ENCODE measurements at regions of chr2 and their contacts with region 1.

Region 1: DNA sequence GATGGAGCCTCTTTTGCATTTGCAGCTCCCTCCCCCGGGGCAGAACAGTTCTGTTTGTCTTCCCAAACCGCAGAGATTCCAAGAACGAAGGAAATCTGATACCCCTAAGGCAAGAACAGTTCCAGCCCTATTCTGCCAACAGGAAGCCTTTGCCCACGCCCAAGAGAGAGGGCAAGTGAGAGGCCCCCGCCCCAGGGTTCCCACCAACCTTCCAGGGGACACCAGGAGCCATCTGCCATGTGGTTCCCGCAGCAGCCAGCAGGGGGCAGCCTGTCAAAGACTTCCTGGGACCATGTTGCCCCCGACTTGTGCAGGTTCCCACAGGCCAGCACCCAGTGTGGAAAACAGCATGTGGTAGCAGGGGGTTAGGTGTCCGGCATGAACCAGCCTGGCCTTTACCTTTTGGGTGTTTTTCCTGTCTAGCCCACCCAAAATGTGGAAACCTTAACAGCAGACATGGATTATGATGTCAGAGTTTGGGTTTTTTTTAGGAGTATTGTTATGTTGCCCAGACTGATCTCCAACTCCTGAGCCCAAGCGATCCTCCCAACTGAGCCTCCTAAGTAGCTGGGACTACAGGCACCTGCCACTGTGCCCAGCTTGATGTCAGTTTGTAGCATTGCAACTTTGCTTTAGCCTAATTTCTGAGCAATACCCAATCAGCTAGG is 21.7 kb upstream of the EFHD1 start:
- DNase-seq: peak; percentile 52
- ATAC-seq: peak; percentile 44 to 64

Region 2: DNA sequence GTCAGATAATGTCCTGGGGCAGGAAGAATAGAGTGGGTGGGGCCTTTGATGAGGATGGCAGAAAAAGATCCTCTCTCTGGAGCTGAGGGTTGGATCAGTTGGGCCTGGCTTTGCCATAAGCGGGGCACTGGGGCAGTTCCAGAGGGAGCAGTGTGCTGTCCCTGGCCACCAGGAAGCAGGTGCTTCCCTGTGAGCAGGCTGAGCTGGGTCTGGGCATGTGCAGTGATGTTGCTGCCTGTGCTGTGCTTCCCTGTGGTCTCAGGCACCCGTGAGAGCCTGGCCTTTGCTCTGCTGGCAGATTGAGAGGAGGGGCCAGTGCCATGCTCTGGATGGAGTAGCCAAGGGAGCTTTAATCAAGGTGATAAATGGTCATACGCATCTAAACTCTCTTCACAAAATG is 670.9 kb before region 1 on chr2:
- intact Hi-C with region 1: no loop called
- DNase-seq: no peak
- ATAC-seq: no peak

Region 3: GRCh38 chr2:232668805-232669444 is 57.2 kb after region 1 on chr2:
- intact Hi-C with region 1: loop called (anchors 2 to 10 kb)
- DNase-seq: no peak
- ATAC-seq: peak; percentile 50 to 59

Region 4: GRCh38 chr2:233053928-233054784 is 442.5 kb after region 1 on chr2:
- intact Hi-C with region 1: loop called in 1 of 2 experiments (anchors 5 kb)
- DNase-seq: peak; percentile 70
- ATAC-seq: peak; percentile 50 to 55

Region 5: DNA sequence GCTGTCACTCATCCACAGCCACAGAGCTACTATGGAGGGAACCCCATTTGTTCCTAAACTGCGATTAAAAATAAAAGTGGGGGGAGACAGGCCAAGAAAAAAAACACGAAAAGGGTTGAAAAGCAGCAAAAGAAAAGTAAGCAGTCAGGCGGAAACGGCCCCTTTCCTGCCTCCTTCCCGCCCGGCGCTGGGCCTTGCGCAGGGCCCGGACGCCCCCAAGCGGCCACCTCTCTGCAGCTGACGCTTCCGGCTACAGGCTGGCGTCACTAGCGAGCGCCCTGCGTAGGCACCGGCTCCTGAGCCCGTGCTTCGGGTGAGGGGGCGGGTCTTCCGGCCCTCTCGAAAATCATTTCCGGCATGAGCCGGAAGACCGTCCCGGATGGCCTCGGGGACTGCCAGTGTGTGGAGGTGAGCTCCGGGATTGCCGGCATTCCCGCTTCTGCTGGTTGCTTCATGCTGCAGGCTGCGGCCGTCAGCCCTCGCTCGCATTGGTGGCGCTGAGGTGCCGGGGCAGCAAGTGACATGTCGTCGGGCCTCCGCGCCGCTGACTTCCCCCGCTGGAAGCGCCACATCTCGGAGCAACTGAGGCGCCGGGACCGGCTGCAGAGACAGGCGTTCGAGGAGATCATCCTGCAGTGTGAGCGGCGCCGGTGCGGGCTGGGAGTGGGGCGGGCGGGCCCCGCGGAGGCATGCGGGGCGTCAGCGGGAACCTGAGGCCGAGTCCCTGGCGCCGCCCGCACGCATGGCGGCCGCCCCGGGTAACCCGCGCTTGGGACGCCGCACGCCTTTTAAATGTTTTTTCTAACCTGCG is 639.8 kb after region 1 on chr2 and contains the start of gene ATG16L1:
- intact Hi-C with region 1: loop called in 1 of 2 experiments (anchors 5 kb)
- DNase-seq: peak; percentile 97
- ATAC-seq: peak; percentile 99 to 100
- total RNA-seq, gene ATG16L1: 15.8 to 17.8 TPM

Measured in left cardiac atrium (tissue), 4 donors.